Activated B cell treated with CpG ODN at 0.5 μM for 24 hours (primary cell): ENCODE measurements at regions of chr6 and their contacts with region 1.

Region 1: DNA sequence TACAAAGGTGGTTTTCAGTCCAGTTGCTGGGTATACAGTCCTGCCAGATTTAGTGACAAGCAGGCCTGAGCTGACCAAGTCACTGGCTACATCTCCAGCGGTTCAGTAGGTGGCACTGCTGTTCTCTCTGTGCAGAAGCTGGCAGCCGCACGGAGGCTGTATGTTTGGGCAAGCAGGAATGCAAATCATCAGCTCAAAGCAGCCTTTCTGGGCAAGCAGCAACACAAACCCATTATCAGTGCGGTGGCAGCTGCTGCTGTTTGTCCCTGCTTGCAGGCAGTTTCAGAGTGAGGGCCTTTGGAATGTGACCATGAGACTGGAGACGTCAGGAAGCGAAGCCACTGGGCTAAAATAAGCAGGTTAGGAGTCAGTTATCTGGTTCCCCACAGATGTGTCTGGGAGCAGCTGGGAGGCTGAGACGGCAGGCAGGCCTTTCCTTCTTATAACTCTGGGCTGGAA is 72.5 kb downstream of the TXLNB start:
- DNase-seq: peak; percentile 52
- ATAC-seq: peak; percentile 100
- H3K4me3 Mint-ChIP-seq: peak overlapping the region; percentile 24
- H3K27ac Mint-ChIP-seq: peak overlapping the region; percentile 73
- H3K4me1 Mint-ChIP-seq: peaks cover 12% of the 10 kb centered on the region
- H3K27me3 Mint-ChIP-seq: no peaks in the 10 kb centered on the region
- CTCF ChIP-seq: no peak

Region 2: GRCh38 chr6:138638604-138639003 is 580.7 kb before region 1 on chr6:
- CTCF ChIA-PET with region 1: no interaction called
- POLR2A ChIA-PET with region 1: no interaction called
- intact Hi-C with region 1: no loop called
- DNase-seq: no peak
- ATAC-seq: no peak
- H3K4me3 Mint-ChIP-seq: no peak overlapping the region
- H3K27ac Mint-ChIP-seq: no peak overlapping the region
- H3K4me1 Mint-ChIP-seq: no peaks in the 10 kb centered on the region
- H3K27me3 Mint-ChIP-seq: no peaks in the 10 kb centered on the region
- CTCF ChIP-seq: no peak

Region 3: DNA sequence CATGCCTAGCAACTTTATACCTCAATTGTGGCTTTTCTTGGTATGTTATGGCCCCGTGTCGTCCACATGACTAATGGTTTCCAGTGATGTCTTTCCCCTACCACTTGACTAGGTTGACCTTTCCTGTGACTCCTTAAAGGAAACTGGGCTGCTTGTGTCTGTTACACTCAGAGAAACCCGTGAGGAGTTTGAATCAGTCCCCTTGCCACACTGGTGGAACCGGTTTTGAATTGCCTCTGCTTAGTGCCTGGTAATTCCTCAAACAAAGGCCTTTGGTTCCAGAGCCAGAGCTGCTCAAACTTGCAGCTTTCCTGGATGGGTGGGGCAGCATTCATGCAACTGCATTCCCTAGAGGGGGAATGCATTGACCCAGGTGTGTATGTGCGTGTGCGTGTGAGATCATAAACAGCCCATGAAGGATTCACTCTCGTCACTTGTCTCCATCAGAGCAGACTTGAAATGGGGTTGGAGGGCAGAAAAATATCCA is 401.4 kb before region 1 on chr6:
- CTCF ChIA-PET with region 1: interaction called, 29 read pairs
- POLR2A ChIA-PET with region 1: no interaction called
- intact Hi-C with region 1: loop called (anchors 1 kb)
- DNase-seq: no peak
- ATAC-seq: no peak
- H3K4me3 Mint-ChIP-seq: no peak overlapping the region
- H3K27ac Mint-ChIP-seq: peak overlapping the region; percentile 70
- H3K4me1 Mint-ChIP-seq: peaks cover 32% of the 10 kb centered on the region
- H3K27me3 Mint-ChIP-seq: no peaks in the 10 kb centered on the region
- CTCF ChIP-seq: no peak

Region 4: GRCh38 chr6:139134817-139135581 is 84.3 kb before region 1 on chr6 and contains the start of gene HECA:
- CTCF ChIA-PET with region 1: interaction called, 5 read pairs
- POLR2A ChIA-PET with region 1: interaction called, 3 read pairs
- intact Hi-C with region 1: loop called (anchors 2 kb)
- DNase-seq: peak; percentile 99
- ATAC-seq: peak; percentile 73
- H3K4me3 Mint-ChIP-seq: peak within 1 kb of the TSS; percentile 95
- H3K27ac Mint-ChIP-seq: peak within 1 kb of the TSS; percentile 98
- H3K4me1 Mint-ChIP-seq: peaks cover 79% of the 10 kb centered on the region
- H3K27me3 Mint-ChIP-seq: no peaks in the 10 kb centered on the region
- CTCF ChIP-seq: no peak
- total RNA-seq, gene HECA: 34.9 and 38.3 TPM in 2 replicates

Region 5: GRCh38 chr6:139250296-139251044 is 31.2 kb after region 1 on chr6:
- CTCF ChIA-PET with region 1: interaction called, 10 read pairs
- POLR2A ChIA-PET with region 1: interaction called, 4 read pairs
- intact Hi-C with region 1: loop called (anchors 1 kb)
- DNase-seq: peak; percentile 32
- ATAC-seq: peak; percentile 100
- H3K4me3 Mint-ChIP-seq: no peak overlapping the region
- H3K27ac Mint-ChIP-seq: no peak overlapping the region
- H3K4me1 Mint-ChIP-seq: peaks cover 12% of the 10 kb centered on the region
- H3K27me3 Mint-ChIP-seq: no peaks in the 10 kb centered on the region
- CTCF ChIP-seq: no peak

Region 6: DNA sequence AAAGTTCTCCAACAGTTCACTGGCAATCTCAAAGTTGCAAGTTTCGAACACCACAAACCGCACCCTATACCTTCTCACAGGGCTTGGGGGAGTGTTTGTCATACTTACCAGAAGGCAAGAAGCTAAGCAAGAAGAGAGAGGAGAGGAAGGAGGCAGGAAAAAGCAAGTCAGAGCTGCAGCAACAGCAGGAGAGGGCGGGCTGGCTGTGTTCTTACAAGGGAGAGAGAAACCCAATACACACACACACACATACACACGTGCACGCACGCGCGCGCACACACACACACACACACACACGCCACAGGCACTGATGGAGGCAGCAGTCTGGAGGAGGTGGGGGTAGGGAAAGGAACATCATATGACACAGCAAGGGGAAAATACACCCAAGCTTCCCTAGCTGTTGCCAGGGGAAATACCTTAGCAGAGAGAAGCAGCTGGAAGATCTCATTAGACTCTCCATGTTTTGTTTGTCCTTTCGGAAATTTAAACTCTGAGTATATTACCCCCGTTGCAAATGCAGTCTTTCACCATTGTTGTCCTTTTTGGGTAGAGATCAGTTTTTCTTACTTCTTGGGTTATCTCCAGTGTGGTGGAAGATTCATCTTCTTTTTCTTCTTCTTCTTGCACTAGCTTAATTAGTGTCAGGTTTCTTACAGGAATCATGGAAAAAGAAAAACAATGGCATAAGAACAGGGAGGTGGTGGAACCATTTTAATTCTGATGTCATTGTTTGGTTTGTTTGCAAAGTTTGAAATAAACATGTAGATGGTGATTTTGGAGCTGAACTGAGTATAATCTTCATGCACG is 72.7 kb after region 1 on chr6 and contains the start of gene TXLNB:
- CTCF ChIA-PET with region 1: interaction called, 7 read pairs
- POLR2A ChIA-PET with region 1: no interaction called
- intact Hi-C with region 1: loop called (anchors 1 kb)
- DNase-seq: no peak
- ATAC-seq: peak; percentile 59
- H3K4me3 Mint-ChIP-seq: peak within 1 kb of the TSS; percentile 76
- H3K27ac Mint-ChIP-seq: peak within 1 kb of the TSS; percentile 96
- H3K4me1 Mint-ChIP-seq: peaks cover 76% of the 10 kb centered on the region
- H3K27me3 Mint-ChIP-seq: no peaks in the 10 kb centered on the region
- CTCF ChIP-seq: no peak
- total RNA-seq, gene TXLNB: 1.9 and 2.4 TPM in 2 replicates

Region 7: GRCh38 chr6:139369568-139370282 is 150.4 kb after region 1 on chr6:
- CTCF ChIA-PET with region 1: interaction called, 220 read pairs
- POLR2A ChIA-PET with region 1: interaction called, 13 read pairs
- intact Hi-C with region 1: loop called (anchors 1 kb)
- DNase-seq: no peak
- ATAC-seq: no peak
- H3K4me3 Mint-ChIP-seq: no peak overlapping the region
- H3K27ac Mint-ChIP-seq: peak overlapping the region; percentile 4
- H3K4me1 Mint-ChIP-seq: peaks cover 27% of the 10 kb centered on the region
- H3K27me3 Mint-ChIP-seq: no peaks in the 10 kb centered on the region
- CTCF ChIP-seq: no peak